Activated CD4-positive, alpha-beta T cell treated with anti-CD3 and anti-CD28 coated beads for 36 hours (primary cell): ENCODE measurements at regions of chr12 and their contacts with region 1.

Region 1: GRCh38 chr12:30847259-30847658 is 79.3 kb upstream of the TSPAN11 start:
- DNase-seq: peak; percentile 23
- ATAC-seq: peak; percentile 31
- H3K4me3 Mint-ChIP-seq: no peak overlapping the region
- H3K27ac Mint-ChIP-seq: no peak overlapping the region
- H3K4me1 Mint-ChIP-seq: peaks cover 9% of the 10 kb centered on the region
- H3K27me3 Mint-ChIP-seq: peaks cover 4% of the 10 kb centered on the region

Region 2: GRCh38 chr12:29519585-29520182 is 1327.6 kb before region 1 on chr12:
- CTCF ChIA-PET with region 1: interaction called, 3 read pairs
- POLR2A ChIA-PET with region 1: no interaction called
- intact Hi-C with region 1: loop called (anchors 1 kb)
- DNase-seq: peak; percentile 39
- ATAC-seq: no peak
- H3K4me3 Mint-ChIP-seq: no peak overlapping the region
- H3K27ac Mint-ChIP-seq: no peak overlapping the region
- H3K4me1 Mint-ChIP-seq: no peaks in the 10 kb centered on the region
- H3K27me3 Mint-ChIP-seq: peaks cover 6% of the 10 kb centered on the region

Region 3: DNA sequence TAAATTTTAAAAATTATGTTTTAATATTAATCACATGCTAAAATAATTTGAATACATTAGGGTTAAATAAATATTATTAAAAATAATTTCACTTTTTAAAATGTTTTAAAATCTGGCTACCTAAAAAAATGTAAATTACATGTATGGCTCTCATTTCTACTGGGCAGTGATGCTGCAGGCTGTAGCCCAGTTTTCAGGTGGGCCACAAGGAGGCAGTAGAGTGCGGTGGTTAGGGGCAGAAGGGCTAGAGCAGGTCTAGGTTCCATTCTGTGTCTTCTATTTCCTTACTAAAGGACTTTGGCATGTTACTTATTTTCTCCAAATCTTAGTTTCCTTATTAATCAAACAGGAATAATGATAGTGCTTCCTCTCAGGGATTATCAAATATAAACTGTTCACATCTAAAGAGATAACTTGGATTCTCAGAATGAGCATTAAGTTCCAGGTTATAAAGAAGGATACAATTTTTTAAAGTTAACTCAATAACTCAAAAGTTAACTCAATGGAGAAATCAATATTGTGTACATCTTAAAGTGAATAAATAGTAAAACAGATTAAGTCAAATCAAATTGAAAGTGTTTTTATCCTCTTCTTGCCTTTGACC is 1294.8 kb before region 1 on chr12:
- CTCF ChIA-PET with region 1: no interaction called
- POLR2A ChIA-PET with region 1: no interaction called
- intact Hi-C with region 1: loop called in 1 of 2 experiments (anchors 1 kb)
- DNase-seq: peak; percentile 83
- ATAC-seq: peak; percentile 81
- H3K4me3 Mint-ChIP-seq: no peak overlapping the region
- H3K27ac Mint-ChIP-seq: no peak overlapping the region
- H3K4me1 Mint-ChIP-seq: no peaks in the 10 kb centered on the region
- H3K27me3 Mint-ChIP-seq: peaks cover 10% of the 10 kb centered on the region

Region 4: DNA sequence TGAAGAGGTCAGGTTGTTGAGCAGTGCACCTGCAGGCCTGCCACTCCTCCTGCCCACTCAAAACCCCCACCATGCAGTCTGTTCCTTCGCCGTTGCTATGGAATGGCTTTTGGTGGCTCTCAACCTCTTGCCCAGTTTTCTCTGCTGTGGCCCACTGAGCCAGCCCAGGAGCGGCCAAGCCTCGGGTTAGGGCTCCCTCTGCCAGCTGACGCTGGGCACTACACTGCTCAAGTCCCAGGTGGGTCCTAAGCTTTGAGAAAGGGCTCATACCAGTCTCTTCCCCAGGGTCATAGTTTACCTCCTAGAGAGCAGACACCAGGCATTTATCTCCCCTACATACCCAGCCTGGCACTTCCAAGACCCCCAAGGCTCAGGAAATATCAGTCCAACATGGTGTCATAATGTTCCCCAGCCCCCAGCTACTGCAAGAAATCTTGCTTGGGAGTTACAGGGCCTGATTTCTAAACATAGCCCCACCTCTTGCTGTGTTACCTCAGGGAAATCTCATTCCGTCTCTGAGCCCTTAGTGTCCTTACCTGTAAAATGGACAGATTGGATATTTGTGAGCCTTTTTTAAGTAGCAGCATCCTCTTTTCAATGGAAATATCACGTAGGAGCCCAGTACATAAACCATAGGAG is 138.7 kb after region 1 on chr12:
- CTCF ChIA-PET with region 1: interaction called, 56 read pairs
- POLR2A ChIA-PET with region 1: no interaction called
- intact Hi-C with region 1: loop called (anchors 1 kb)
- DNase-seq: peak; percentile 59
- ATAC-seq: peak; percentile 69
- H3K4me3 Mint-ChIP-seq: no peak overlapping the region
- H3K27ac Mint-ChIP-seq: no peak overlapping the region
- H3K4me1 Mint-ChIP-seq: no peaks in the 10 kb centered on the region
- H3K27me3 Mint-ChIP-seq: no peaks in the 10 kb centered on the region

Region 5: GRCh38 chr12:31057671-31058070 is 210.4 kb after region 1 on chr12:
- CTCF ChIA-PET with region 1: no interaction called
- POLR2A ChIA-PET with region 1: no interaction called
- intact Hi-C with region 1: loop called in 1 of 2 experiments (anchors 5 kb)
- DNase-seq: no peak
- ATAC-seq: no peak
- H3K4me3 Mint-ChIP-seq: no peak overlapping the region
- H3K27ac Mint-ChIP-seq: no peak overlapping the region
- H3K4me1 Mint-ChIP-seq: peaks cover 6% of the 10 kb centered on the region
- H3K27me3 Mint-ChIP-seq: no peaks in the 10 kb centered on the region

Region 6: GRCh38 chr12:31238764-31239387 is 391.6 kb after region 1 on chr12:
- CTCF ChIA-PET with region 1: interaction called, 33 read pairs
- POLR2A ChIA-PET with region 1: no interaction called
- intact Hi-C with region 1: loop called (anchors 1 kb)
- DNase-seq: peak; percentile 81
- ATAC-seq: peak; percentile 87
- H3K4me3 Mint-ChIP-seq: no peak overlapping the region
- H3K27ac Mint-ChIP-seq: no peak overlapping the region
- H3K4me1 Mint-ChIP-seq: no peaks in the 10 kb centered on the region
- H3K27me3 Mint-ChIP-seq: peaks cover 20% of the 10 kb centered on the region